ENCODE measurements at regions of chr18 and their contacts with region 1.

Region 1: GRCh38 chr18:54679318-54680149 is 88.5 kb downstream of the DYNAP start:
- DNase-seq: no peak
- ATAC-seq: peak; percentile 90 to 96 (median 94)
- H3K4me3 ChIP-seq: no peak overlapping the region
- H3K27ac ChIP-seq: no peak overlapping the region
- H3K4me1 ChIP-seq: no peaks in the 10 kb centered on the region
- H3K27me3 ChIP-seq: no peaks in the 10 kb centered on the region
- CTCF ChIP-seq: peak; percentile 51 to 75 (median 64)
- POLR2A ChIP-seq: no peak

Region 2: DNA sequence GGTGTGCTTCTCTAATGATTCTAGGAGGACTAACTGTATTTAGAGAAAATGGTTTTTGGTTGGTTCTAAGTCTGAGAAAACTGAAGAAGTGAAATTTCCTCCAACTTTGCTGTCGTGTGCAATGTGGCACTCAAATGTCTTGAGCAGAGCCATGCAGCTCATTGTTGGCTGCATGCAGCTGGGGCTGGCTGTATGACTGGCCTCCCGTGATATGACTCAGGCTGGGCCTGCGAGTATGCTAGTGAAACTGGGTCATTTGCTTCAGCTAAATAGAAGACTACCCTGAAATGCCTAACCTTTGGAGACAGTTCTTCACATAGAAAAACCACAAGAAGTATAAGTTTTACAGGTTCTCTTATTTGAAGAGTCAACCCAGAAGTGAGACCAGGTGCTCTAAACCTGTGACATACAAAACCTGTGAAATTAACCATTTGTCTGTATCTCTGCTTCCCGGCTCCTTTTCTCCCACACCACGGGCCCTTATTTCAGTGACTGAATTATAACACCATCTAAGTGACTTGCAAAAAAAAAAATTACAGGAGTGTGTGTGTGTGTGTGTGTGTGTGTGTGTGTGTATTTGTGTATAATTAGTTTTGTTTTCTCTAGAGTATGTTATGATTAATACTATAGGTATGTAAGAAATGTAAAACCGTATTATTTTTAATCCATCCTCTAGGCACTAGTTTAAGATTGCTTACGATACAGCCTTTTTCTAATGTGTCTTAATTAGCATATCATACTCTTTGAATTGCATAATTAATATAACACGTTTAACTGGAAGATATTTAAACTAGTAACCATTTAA is 394.4 kb before region 1 on chr18:
- intact Hi-C with region 1: no loop called
- DNase-seq: no peak
- ATAC-seq: peak in 2 of 4 donors; percentile 29 to 36
- H3K4me3 ChIP-seq: no peak overlapping the region
- H3K27ac ChIP-seq: no peak overlapping the region
- H3K4me1 ChIP-seq: no peaks in the 10 kb centered on the region
- H3K27me3 ChIP-seq: no peaks in the 10 kb centered on the region
- CTCF ChIP-seq: no peak
- POLR2A ChIP-seq: no peak

Region 3: GRCh38 chr18:54444319-54444914 is 235.1 kb before region 1 on chr18:
- intact Hi-C with region 1: loop called in 1 of 2 experiments (anchors 10 kb)
- DNase-seq: peak in 2 of 3 donors; percentile 38 to 56
- ATAC-seq: peak; percentile 69 to 93 (median 80)
- H3K4me3 ChIP-seq: no peak overlapping the region
- H3K27ac ChIP-seq: no peak overlapping the region
- H3K4me1 ChIP-seq: no peaks in the 10 kb centered on the region
- H3K27me3 ChIP-seq: no peaks in the 10 kb centered on the region
- CTCF ChIP-seq: peak; percentile 66 to 76 (median 72)
- POLR2A ChIP-seq: no peak

Region 4: GRCh38 chr18:54622084-54622483 is 57.5 kb before region 1 on chr18:
- intact Hi-C with region 1: no loop called
- DNase-seq: no peak
- ATAC-seq: no peak
- H3K4me3 ChIP-seq: no peak overlapping the region
- H3K27ac ChIP-seq: no peak overlapping the region
- H3K4me1 ChIP-seq: no peaks in the 10 kb centered on the region
- H3K27me3 ChIP-seq: no peaks in the 10 kb centered on the region
- CTCF ChIP-seq: no peak
- POLR2A ChIP-seq: no peak

Region 5: DNA sequence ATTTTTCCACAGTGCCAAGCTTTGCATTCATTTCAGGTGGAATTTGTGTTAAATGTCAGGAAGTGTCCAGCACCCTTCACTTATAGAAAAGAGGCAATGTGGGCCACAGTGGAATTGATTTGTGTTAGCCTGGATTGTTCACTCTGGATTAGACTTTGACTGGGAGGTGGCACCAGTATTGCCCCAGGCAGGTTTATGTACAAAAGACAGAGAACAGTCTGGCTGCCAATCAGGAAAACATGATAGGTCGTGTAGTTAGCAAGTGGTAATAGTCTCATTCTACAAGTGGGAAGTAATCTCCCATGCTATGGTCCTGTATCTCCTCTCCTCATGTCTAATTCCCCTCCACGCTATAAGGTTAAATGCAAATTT is 194.3 kb after region 1 on chr18:
- intact Hi-C with region 1: no loop called
- DNase-seq: peak in 2 of 3 donors; percentile 25 to 74
- ATAC-seq: peak; percentile 98 to 99 (median 98)
- H3K4me3 ChIP-seq: no peak overlapping the region
- H3K27ac ChIP-seq: peak overlapping the region in 2 of 3 donors; percentile 4 to 43
- H3K4me1 ChIP-seq: peaks cover 0 to 15% (median 7%) of the 10 kb centered on the region in 4 donors
- H3K27me3 ChIP-seq: no peaks in the 10 kb centered on the region
- CTCF ChIP-seq: no peak
- POLR2A ChIP-seq: no peak

Region 6: GRCh38 chr18:54983041-54983686 is 303.6 kb after region 1 on chr18:
- intact Hi-C with region 1: loop called (anchors 10 kb)
- DNase-seq: no peak
- ATAC-seq: peak; percentile 82 to 92 (median 85)
- H3K4me3 ChIP-seq: no peak overlapping the region
- H3K27ac ChIP-seq: no peak overlapping the region
- H3K4me1 ChIP-seq: no peaks in the 10 kb centered on the region
- H3K27me3 ChIP-seq: no peaks in the 10 kb centered on the region
- CTCF ChIP-seq: peak; percentile 63 to 81 (median 69)
- POLR2A ChIP-seq: no peak

Measured in right lobe of liver (tissue), 6 donors.